ENCODE measurements at regions of chr7 and their contacts with region 1.

Region 1: DNA sequence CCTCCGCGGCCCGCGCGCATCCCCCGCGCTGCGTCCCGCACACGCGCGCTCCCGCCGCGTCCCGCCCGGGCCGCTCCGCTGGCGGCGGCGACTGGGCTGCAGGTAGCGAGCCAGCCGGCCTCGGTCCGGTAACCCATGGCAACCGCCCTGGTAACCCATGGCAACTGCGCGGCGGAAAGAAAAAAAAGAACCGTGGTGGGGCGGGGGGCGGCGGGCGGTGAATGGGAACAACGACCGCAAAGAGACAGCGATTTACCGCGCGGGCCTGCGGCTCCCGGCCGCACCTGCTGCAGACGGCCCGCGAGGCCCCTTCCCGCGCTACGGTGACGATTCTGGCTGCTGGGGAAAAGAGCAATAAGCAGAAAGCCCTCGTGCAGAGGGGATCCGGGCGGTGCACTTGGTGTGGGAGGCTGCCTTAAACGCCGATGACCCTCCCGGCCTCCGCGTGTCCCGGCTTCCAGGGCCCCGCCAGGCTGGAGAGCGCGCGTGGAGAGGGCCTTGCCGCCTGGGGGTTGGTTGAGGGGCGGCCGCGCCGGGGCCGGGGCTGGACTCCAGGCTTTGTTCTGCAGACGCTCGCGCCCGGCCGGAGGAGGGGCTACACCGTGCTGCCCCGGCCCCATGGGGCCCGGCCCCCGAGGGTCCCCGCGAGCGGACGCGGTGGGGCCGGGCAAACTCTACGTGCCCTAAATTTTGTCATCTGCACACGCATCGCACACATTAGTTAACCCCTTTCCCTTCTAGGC is 84.7 kb downstream of the SNX10 start:
- DNase-seq: peak; percentile 63
- ATAC-seq: peak; percentile 74 to 83
- H3K4me3 ChIP-seq: peak overlapping the region; percentile 60
- H3K27ac ChIP-seq: peak overlapping the region; percentile 84
- H3K4me1 ChIP-seq: peaks cover 13% of the 10 kb centered on the region
- H3K27me3 ChIP-seq: peaks cover 52% of the 10 kb centered on the region
- CTCF ChIP-seq: no peak

Region 2: GRCh38 chr7:25913598-25914224 is 462.6 kb before region 1 on chr7:
- intact Hi-C with region 1: no loop called
- DNase-seq: no peak
- ATAC-seq: no peak
- H3K4me3 ChIP-seq: no peak overlapping the region
- H3K27ac ChIP-seq: no peak overlapping the region
- H3K4me1 ChIP-seq: no peaks in the 10 kb centered on the region
- H3K27me3 ChIP-seq: peaks cover 18% of the 10 kb centered on the region
- CTCF ChIP-seq: no peak

Region 3: DNA sequence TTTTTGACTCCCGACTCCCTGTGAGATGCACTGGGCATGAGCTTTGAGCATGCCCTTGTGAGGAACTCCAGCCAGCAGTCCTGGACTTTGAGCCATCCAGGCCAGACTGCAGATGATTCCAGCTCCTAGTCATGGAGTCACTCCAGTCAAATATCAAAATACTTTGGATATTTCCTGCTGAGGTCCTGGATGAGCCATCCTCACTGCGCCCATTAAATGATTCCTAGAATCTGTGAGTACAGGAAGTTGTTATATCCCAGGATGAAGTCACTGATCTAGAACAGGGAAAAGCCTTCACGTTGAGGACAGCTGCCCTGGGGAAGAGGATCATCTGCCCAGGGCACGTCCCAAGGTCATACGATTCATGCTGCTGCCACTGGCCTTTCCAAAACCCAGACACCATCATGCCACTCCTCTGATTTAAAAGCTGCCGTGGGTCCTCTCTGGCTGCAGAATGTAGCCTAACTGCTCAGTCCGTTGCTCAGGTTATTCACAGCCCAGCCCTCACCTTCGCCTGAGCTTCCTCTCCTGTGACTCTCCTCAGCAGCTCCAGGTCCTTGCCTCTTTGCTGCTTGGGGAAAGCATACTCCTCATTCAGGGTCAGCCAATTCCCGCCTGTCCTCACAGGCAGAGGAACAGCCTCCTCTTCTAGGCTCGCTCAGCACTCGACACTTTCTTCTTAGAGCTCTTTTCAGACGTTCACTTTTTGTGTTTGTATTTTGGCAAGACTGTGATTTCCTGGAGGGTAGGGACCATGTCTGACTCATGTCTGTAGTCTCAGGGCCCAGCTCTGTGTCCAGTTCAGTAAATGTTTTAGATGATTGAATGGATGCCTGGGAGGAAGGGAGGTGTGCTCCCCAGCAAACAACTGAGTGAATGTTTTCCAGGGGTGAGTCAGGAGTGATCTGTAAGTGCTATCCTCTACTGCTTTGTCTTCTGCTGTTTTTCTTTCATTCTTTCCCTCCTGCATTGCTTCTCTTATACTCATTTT is 73.1 kb after region 1 on chr7:
- intact Hi-C with region 1: no loop called
- DNase-seq: no peak
- ATAC-seq: no peak
- H3K4me3 ChIP-seq: no peak overlapping the region
- H3K27ac ChIP-seq: peak overlapping the region; percentile 46
- H3K4me1 ChIP-seq: no peaks in the 10 kb centered on the region
- H3K27me3 ChIP-seq: no peaks in the 10 kb centered on the region
- CTCF ChIP-seq: no peak

Region 4: GRCh38 chr7:26667500-26668133 is 291.3 kb after region 1 on chr7:
- intact Hi-C with region 1: loop called (anchors 5 kb)
- DNase-seq: no peak
- ATAC-seq: peak; percentile 76 to 85
- H3K4me3 ChIP-seq: no peak overlapping the region
- H3K27ac ChIP-seq: no peak overlapping the region
- H3K4me1 ChIP-seq: peaks cover 24% of the 10 kb centered on the region
- H3K27me3 ChIP-seq: no peaks in the 10 kb centered on the region
- CTCF ChIP-seq: peak; percentile 79

Region 5: DNA sequence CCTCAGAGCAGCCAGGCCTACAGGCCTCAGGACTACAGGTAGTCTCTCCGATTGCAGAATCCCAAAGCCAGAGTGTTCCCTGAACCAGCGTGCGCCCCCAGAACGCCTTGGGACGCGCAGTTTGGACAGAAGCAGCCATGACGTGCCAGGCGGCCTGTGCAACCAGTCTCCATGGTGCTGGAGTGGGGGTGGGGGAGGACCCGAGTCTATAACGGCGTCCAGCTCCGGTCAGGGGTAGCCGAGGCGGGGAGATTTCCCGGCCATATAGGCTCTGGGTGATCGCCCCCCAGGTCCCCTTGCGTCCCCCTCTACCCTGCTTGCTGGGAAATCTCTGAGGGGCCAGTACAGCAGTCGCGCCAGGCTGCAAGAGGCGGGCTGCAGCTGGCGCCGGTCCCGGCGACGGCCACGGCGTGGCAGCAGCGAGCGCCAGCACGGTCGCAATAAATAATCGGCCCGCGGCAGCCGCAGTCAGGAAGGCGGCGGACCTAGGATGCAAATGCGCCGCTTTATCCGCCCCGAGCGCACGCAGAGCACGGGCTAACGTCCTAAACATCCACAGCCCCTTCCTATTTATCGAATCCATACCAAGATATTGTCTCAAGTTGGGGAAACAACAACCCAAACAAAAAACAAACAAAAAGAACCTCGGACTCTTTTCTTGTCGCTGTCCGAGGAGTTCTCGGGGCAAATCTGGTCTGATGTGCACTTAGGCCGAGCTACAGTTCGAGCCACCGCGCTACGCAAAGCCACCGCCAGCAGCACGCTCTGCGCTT is 774.4 kb after region 1 on chr7:
- intact Hi-C with region 1: loop called (anchors 10 kb)
- DNase-seq: peak; percentile 82
- ATAC-seq: peak; percentile 75 to 87
- H3K4me3 ChIP-seq: peak overlapping the region; percentile 60
- H3K27ac ChIP-seq: peak overlapping the region; percentile 89
- H3K4me1 ChIP-seq: peaks cover 63% of the 10 kb centered on the region
- H3K27me3 ChIP-seq: peaks cover 89% of the 10 kb centered on the region
- CTCF ChIP-seq: peak; percentile 90

Measured in lower lobe of right lung (tissue), 2 donors.